ENCODE measurements at regions of chr2 and their contacts with region 1.

Region 1: DNA sequence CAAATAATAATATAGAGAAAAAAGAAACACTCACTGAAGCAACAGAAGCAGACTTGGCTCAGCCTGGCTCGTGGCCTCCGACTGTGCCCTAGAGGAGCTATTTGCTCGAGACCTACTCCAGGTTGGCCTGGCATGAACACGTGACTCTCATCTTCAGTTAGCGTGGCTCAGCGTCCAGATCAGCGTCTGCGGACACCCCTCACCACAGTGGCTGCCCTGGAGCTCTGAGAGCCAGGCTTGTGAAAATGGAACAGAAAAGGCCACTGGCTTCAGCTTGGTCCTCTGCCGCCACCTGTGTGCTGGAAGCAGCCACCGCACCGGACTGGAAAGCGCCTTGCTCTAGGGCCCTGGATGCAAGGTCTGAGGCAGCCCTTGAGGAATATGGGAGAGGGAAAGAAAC is 1184.0 kb upstream of the GYPC start:
- DNase-seq: peak; percentile 38
- ATAC-seq: peak; percentile 70; the same call in 1 of the 2 replicates
- H3K4me3 ChIP-seq: no peak overlapping the region
- H3K27ac ChIP-seq: no peak overlapping the region
- H3K4me1 ChIP-seq: no peaks in the 10 kb centered on the region
- H3K27me3 ChIP-seq: no peaks in the 10 kb centered on the region
- CTCF ChIP-seq: peak; percentile 76
- POLR2A ChIP-seq: no peak
- RAD21 ChIP-seq: peak; percentile 91

Region 2: GRCh38 chr2:124668161-124668560 is 803.8 kb before region 1 on chr2:
- CTCF ChIA-PET with region 1: no interaction called
- POLR2A ChIA-PET with region 1: no interaction called
- dilution Hi-C with region 1: no loop called
- in situ Hi-C with region 1: no loop called
- intact Hi-C with region 1: loop called (anchors 10 kb)
- DNase-seq: peak; percentile 81
- ATAC-seq: peak; percentile 95
- H3K4me3 ChIP-seq: no peak overlapping the region
- H3K27ac ChIP-seq: no peak overlapping the region
- H3K4me1 ChIP-seq: peaks cover 6% of the 10 kb centered on the region
- H3K27me3 ChIP-seq: no peaks in the 10 kb centered on the region
- CTCF ChIP-seq: no peak
- POLR2A ChIP-seq: no peak
- RAD21 ChIP-seq: no peak

Region 3: DNA sequence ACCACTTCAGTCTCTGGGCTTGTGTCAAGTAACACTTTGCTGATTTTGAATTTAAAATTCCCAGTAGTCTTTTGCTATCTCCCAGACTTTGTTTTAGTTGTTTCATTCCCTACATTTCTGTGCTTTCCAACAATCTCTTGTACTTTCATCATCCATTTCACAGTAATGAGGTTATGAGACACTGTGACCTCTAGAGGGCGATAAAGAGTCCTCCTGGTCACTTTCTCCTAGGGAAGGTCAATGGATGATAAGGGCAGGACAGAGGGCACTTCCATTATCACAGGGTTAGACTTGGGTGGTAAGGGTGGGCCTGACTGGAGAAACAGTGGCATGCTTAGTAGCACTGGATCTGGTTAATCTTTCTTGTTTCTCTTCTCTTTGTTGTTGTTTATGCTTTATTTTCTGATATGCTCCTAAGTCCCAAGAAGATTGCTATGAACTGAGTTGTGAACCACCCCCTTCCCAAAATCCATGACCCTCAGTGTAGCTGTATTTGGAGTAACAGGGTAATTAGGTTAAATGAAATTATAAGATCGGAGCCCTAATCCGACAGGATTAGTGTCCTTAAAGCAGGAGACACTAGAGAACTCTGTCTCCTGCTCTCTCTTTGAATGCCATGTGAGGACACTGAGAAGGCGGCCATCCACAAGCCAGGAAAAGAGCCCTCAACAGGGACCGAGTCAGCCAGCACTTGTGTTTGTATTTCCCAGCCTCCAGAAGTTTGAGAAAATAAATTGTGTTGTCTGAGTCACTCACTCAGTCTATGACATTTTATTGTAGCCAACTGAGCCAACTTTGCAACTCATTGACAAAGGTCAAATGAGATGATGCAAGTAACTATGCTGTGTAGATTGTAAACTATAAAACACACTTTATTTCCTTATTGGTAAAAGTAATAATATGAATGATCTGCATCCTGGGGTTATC is 667.7 kb before region 1 on chr2:
- CTCF ChIA-PET with region 1: no interaction called
- POLR2A ChIA-PET with region 1: no interaction called
- dilution Hi-C with region 1: no loop called
- in situ Hi-C with region 1: no loop called
- intact Hi-C with region 1: loop called (anchors 2 kb)
- DNase-seq: peak; percentile 25
- ATAC-seq: peak; percentile 49; the same call in 1 of the 2 replicates
- H3K4me3 ChIP-seq: no peak overlapping the region
- H3K27ac ChIP-seq: no peak overlapping the region
- H3K4me1 ChIP-seq: no peaks in the 10 kb centered on the region; the same call in 1 of the 2 replicates
- H3K27me3 ChIP-seq: no peaks in the 10 kb centered on the region
- CTCF ChIP-seq: peak; percentile 47
- POLR2A ChIP-seq: no peak
- RAD21 ChIP-seq: peak; percentile 42

Region 4: GRCh38 chr2:125240873-125241272 is 231.1 kb before region 1 on chr2:
- CTCF ChIA-PET with region 1: no interaction called
- POLR2A ChIA-PET with region 1: no interaction called
- dilution Hi-C with region 1: no loop called
- in situ Hi-C with region 1: no loop called
- intact Hi-C with region 1: no loop called
- DNase-seq: no peak
- ATAC-seq: no peak
- H3K4me3 ChIP-seq: no peak overlapping the region
- H3K27ac ChIP-seq: no peak overlapping the region
- H3K4me1 ChIP-seq: no peaks in the 10 kb centered on the region
- H3K27me3 ChIP-seq: no peaks in the 10 kb centered on the region
- CTCF ChIP-seq: no peak
- POLR2A ChIP-seq: no peak
- RAD21 ChIP-seq: no peak

Measured in IMR-90 (cell line).